ENCODE measurements at regions of chr4 and their contacts with region 1.

Region 1: GRCh38 chr4:39181905-39182638 is at the start of gene WDR19:
- DNase-seq: peak; percentile 97 to 99
- H3K4me3 ChIP-seq: peak within 1 kb of the TSS; percentile 71 to 87
- H3K27ac ChIP-seq: peak within 1 kb of the TSS; percentile 41 to 66
- H3K4me1 ChIP-seq: peaks cover 0 to 4% of the 10 kb centered on the region in 2 donors
- H3K27me3 ChIP-seq: no peaks in the 10 kb centered on the region
- CTCF ChIP-seq: peak; percentile 28 to 59 (median 40)
- total RNA-seq, gene WDR19: 28.3 TPM

Region 2: GRCh38 chr4:38620790-38621684 is 561.0 kb before region 1 on chr4:
- intact Hi-C with region 1: no loop called
- DNase-seq: no peak
- H3K4me3 ChIP-seq: no peak overlapping the region
- H3K27ac ChIP-seq: no peak overlapping the region
- H3K4me1 ChIP-seq: no peaks in the 10 kb centered on the region
- H3K27me3 ChIP-seq: no peaks in the 10 kb centered on the region
- CTCF ChIP-seq: no peak

Region 3: DNA sequence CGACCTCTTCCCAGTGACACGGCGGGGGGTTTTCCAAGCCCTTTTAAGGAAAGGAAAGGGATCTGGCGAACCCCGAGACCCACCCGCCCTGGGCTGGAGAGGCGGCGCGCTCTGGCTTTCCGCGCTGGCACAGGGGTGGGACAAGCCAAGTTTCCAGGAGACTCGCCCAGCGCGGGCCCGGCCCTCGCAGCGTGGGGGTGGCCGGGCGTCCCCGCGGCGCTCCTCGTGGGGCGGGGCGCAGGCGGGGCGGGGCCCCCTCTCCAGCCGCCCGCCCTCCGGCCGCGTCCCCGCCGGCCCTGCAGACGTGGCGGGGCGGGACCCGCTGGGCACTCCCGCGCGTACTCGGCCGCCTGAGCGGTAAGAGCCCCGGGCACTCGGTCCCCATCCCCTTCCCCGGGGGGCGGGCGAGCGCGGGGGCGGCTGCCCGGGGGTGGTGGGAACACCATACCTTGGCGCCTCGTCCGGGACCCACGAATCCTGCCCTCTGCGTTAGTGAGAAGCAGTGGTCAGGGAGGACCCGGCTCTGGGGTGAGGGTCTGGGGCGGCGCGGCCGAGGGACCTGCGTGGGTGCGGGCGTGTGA is 314.5 kb before region 1 on chr4 and contains the start of gene FAM114A1:
- intact Hi-C with region 1: loop called (anchors 5 kb)
- DNase-seq: peak in 1 of 2 donors; percentile 89
- H3K4me3 ChIP-seq: peak within 1 kb of the TSS; percentile 74 to 83
- H3K27ac ChIP-seq: peak within 1 kb of the TSS; percentile 94 to 96
- H3K4me1 ChIP-seq: peaks cover 0 to 13% of the 10 kb centered on the region in 2 donors
- H3K27me3 ChIP-seq: no peaks in the 10 kb centered on the region
- CTCF ChIP-seq: no peak
- total RNA-seq, gene FAM114A1: 45.7 TPM

Region 4: GRCh38 chr4:39256436-39256835 is 74.4 kb after region 1 on chr4:
- intact Hi-C with region 1: loop called (anchors 1 kb)
- DNase-seq: peak in 1 of 2 donors; percentile 71
- H3K4me3 ChIP-seq: peak overlapping the region in 1 of 2 donors; percentile 19
- H3K27ac ChIP-seq: peak overlapping the region; percentile 77 to 79
- H3K4me1 ChIP-seq: peaks cover 0 to 17% of the 10 kb centered on the region in 2 donors
- H3K27me3 ChIP-seq: no peaks in the 10 kb centered on the region
- CTCF ChIP-seq: no peak

Region 5: DNA sequence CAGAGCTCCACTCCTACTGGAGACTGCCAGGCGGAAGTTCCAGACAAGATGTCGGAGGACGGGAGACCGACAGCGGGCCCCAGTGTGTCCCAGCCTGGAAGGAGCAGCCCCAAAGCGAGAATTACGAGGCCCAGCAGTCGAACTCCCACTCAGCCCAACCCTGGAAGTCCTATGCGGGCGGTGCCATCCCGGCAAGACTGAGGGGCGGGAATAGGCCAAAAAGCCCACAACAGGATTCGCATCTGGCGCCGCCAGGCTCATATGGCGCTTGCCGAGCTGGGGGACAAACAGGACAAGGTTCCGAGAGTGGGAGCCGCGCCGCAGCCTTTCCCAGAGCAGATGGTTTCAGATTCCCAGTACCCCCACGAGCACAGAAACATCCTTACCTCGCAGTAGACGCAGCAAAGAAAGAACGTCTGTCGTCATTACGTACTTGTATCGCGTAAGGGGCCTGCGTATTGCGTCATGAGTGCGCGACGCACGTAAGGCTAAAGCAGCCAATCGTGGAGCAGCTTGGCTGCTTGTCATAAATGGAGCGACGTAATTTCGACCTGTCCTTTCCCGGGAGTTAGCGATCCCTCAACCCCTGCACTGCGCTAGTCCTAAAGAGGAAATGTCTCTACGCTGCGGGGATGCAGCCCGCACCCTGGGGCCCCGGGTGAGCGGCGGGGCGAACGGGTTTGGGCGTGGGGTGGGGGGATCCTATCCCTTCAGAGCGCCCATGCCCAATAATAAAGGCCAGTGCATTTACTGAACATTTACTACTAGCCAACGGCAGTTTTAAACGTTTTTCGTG is 276.6 kb after region 1 on chr4 and contains the starts of genes LIAS and RPL9:
- intact Hi-C with region 1: loop called (anchors 2 kb)
- DNase-seq: peak; percentile 90 to 98
- H3K4me3 ChIP-seq: peak within 1 kb of the TSS; percentile 82 to 96
- H3K27ac ChIP-seq: peak within 1 kb of the TSS; percentile 96 to 98
- H3K4me1 ChIP-seq: peaks cover 2 to 16% of the 10 kb centered on the region in 2 donors
- H3K27me3 ChIP-seq: no peaks in the 10 kb centered on the region
- CTCF ChIP-seq: peak in 1 of 3 experiments; percentile 24
- total RNA-seq, gene LIAS: 2.9 TPM
- total RNA-seq, gene RPL9: 1,701 TPM

Region 6: GRCh38 chr4:39812500-39812899 is 630.4 kb after region 1 on chr4:
- intact Hi-C with region 1: no loop called
- DNase-seq: no peak
- H3K4me3 ChIP-seq: no peak overlapping the region
- H3K27ac ChIP-seq: no peak overlapping the region
- H3K4me1 ChIP-seq: no peaks in the 10 kb centered on the region
- H3K27me3 ChIP-seq: no peaks in the 10 kb centered on the region
- CTCF ChIP-seq: no peak

Measured in ascending aorta (tissue), 2 donors.